ENCODE measurements at regions of chr16 and their contacts with region 1.

Region 1: GRCh38 chr16:9008601-9009260 is 45.0 kb upstream of the USP7 start:
- DNase-seq: no peak
- H3K4me3 ChIP-seq: peak overlapping the region; percentile 6; the same call in 1 of the 2 replicates
- H3K27me3 ChIP-seq: 0 out of 2 replicates have a peak, but pooled peaks cover 3% of the 10 kb centered on the region
- CTCF ChIP-seq: peak; percentile 97

Region 2: DNA sequence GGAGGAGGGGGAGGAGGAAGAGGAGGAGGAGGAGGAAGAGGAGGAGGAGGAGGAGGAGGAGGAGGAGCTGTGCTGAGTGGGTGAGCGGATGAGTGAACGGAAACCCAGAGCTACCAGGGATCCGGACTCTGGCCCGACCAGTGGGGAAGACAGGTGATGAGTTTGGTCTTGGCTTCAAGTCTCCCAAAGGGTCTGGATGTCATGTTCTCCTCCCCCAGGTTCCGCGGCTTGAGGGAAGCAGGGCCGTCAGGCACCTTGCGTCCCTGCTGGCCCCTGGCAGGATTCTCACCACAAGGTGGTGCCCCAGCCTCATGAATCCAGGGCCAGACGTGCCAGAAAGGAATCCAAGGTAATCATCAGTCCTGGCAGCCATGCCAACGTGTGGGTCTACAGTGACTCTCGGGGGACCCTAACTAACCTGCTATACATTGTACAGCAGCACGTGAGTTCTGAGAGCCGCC is 347.9 kb before region 1 on chr16:
- CTCF ChIA-PET with region 1: interaction called, 11 read pairs
- POLR2A ChIA-PET with region 1: no interaction called
- DNase-seq: no peak
- H3K4me3 ChIP-seq: no peak overlapping the region
- H3K27me3 ChIP-seq: no peaks in the 10 kb centered on the region; the same call in 1 of the 2 replicates
- CTCF ChIP-seq: peak; percentile 73

Region 3: DNA sequence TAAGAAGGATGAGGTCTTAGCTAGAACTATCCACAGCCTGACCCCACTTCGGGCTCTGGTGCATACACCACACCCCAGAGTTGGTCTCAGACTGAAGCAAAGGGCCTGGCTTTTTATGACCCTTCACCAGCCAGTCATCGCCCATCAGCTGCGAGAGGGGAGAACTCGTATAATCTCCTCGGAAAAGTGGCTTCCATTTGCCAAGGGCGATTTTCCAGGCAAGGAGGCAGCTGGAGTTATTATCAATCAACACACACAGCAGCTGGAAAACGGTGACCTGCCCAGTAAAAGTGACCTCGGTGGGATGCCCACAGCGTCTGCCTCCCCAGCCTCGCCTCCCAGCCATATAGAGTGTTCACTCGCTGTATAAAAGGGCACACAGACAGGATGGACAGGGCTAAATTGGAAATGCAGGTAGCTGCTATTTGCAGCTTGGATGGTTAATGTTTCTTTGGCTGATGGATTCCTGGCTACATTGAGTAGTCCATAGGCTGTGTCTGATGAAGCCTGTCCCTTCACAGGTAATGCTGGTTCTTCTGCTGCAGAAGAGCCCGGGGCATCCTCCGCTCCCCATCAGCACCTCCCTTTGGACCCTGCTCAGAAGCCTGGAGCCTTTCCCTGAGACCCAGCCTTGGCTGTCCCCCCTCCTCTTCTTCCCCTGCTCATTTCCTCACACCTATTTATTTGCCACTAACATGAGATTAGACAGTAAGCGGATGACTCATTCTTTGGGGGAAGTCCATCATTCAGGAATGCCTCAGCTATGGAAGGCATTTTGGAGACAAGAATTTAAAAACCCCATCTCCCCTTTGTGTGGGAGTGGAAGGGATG is 257.0 kb before region 1 on chr16:
- CTCF ChIA-PET with region 1: no interaction called
- POLR2A ChIA-PET with region 1: no interaction called
- DNase-seq: peak; percentile 56
- H3K4me3 ChIP-seq: no peak overlapping the region
- H3K27me3 ChIP-seq: no peaks in the 10 kb centered on the region
- CTCF ChIP-seq: no peak

Region 4: DNA sequence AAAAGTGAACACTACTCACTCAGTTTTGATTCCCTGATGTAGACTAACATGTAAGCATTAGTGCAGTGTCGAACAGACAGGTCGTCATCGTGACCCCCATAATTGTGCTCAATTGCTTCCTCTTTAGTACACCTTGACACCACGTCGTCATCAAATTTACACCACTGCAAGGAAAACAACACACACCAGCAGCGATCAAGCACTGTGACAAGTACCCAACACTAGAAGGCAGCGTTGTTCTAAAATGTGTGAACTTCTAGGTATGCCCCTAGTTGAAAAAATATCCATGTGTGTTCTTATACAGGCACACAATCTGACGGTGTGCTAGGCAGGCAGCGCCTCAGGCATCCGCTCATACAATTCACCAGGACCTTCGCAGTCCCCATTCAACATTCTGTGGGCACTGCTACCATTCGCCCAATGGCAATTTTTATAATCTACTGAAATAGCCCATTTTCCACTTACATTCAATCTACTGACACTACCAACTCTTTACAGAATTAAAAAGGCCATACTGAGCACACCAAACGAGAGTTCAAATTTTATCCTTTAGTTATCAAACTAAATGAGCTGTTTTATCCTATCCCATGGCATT is 103.5 kb before region 1 on chr16:
- CTCF ChIA-PET with region 1: interaction called, 12 read pairs
- POLR2A ChIA-PET with region 1: no interaction called
- DNase-seq: no peak
- H3K4me3 ChIP-seq: no peak overlapping the region
- H3K27me3 ChIP-seq: no peaks in the 10 kb centered on the region
- CTCF ChIP-seq: peak; percentile 54

Region 5: DNA sequence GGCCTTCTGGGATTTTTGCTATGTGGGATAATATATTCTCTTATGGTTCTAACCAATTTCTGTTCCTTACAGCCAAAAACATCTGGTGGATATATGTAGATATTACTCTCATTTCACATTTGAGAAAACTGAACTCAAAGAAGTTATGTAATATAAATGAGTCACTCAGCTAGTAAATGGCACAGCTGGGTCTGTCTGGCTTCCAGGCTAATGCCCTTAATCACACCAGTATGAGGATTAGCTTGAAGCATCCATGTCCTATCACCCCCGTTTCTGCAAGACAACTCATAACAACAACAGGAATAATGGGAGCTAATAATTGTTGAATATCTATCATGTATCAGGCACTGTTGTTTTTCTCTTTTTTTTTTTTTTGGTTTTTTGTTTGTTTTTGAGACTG is 10.6 kb before region 1 on chr16:
- CTCF ChIA-PET with region 1: interaction called, 29 read pairs
- POLR2A ChIA-PET with region 1: no interaction called
- DNase-seq: peak; percentile 25
- H3K4me3 ChIP-seq: no peak overlapping the region
- H3K27me3 ChIP-seq: no peaks in the 10 kb centered on the region
- CTCF ChIP-seq: no peak

Region 6: GRCh38 chr16:9033125-9033830 is 24.5 kb after region 1 on chr16:
- CTCF ChIA-PET with region 1: interaction called, 11 read pairs
- POLR2A ChIA-PET with region 1: no interaction called
- DNase-seq: no peak
- H3K4me3 ChIP-seq: no peak overlapping the region
- H3K27me3 ChIP-seq: no peaks in the 10 kb centered on the region
- CTCF ChIP-seq: peak; percentile 83